ENCODE measurements at regions of chr3 and their contacts with region 1.

Region 1: DNA sequence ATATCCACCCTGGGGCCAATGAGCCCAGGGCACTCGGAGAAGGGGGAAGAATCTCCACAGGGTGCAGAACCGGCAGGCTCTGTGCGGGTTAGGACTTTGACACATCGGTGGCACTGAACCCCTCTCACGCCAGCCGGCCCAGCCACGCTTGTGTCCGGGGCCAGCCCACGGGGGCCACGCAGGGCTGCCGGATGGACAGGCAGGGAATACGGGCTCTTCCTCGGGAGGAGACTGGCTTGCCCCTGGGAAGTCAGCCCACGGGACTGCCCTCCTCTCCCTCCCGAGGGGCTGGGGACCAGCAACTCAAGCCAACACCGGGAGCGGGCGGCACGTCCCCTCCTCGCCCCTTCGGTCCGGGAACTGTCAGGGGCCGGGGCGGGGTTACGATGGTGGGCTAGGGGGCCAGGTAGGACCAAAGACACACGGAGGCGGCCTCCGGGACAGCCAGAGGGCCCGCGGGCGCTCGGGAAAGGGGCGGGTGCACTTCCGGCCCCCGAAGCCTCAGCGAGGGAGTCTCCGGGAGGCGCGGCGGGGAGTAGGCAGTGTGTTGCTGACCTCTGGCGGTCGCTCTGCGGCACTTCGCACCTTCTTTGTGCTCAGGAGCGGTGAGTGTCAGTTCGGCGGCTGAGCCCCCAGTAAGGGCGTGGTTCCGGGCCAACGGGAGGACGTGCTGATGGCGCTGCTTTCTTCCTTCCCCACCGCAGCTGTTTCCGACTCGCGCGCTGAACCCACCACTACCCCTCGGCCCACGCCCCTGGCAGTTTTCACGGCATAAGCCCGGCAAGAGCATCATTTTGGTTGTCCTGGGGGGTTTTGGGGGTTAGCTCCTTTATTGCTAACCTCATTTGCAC is 5.1 kb upstream of the CYP8B1 start:
- DNase-seq: peak; percentile 84 to 85
- H3K4me3 ChIP-seq: peak overlapping the region; percentile 58
- H3K4me3 Mint-ChIP-seq: peak overlapping the region; percentile 73
- H3K27ac Mint-ChIP-seq: peak overlapping the region; percentile 16
- H3K4me1 ChIP-seq: peaks cover 5% of the 10 kb centered on the region; the same call in 1 of the 2 replicates
- H3K4me1 Mint-ChIP-seq: peaks cover 5% of the 10 kb centered on the region
- H3K27me3 ChIP-seq: no peaks in the 10 kb centered on the region
- H3K27me3 Mint-ChIP-seq: no peaks in the 10 kb centered on the region
- CTCF ChIP-seq: peak; percentile 89 to 90

Region 2: GRCh38 chr3:42831321-42831713 is 49.5 kb before region 1 on chr3:
- CTCF ChIA-PET with region 1: interaction called, 17 read pairs
- POLR2A ChIA-PET with region 1: no interaction called
- intact Hi-C with region 1: loop called (anchors 1 kb)
- DNase-seq: peak; percentile 64 to 75
- H3K4me3 ChIP-seq: no peak overlapping the region
- H3K4me3 Mint-ChIP-seq: no peak overlapping the region
- H3K27ac Mint-ChIP-seq: no peak overlapping the region
- H3K4me1 ChIP-seq: peaks cover 36% of the 10 kb centered on the region
- H3K4me1 Mint-ChIP-seq: peaks cover 25% of the 10 kb centered on the region
- H3K27me3 ChIP-seq: no peaks in the 10 kb centered on the region
- H3K27me3 Mint-ChIP-seq: no peaks in the 10 kb centered on the region
- CTCF ChIP-seq: peak; percentile 73 to 76

Region 3: GRCh38 chr3:42839616-42840015 is 41.2 kb before region 1 on chr3:
- CTCF ChIA-PET with region 1: interaction called, 8 read pairs
- POLR2A ChIA-PET with region 1: no interaction called
- intact Hi-C with region 1: loop called (anchors 2 kb)
- DNase-seq: peak; percentile 48 to 61
- H3K4me3 ChIP-seq: no peak overlapping the region
- H3K4me3 Mint-ChIP-seq: no peak overlapping the region
- H3K27ac Mint-ChIP-seq: no peak overlapping the region
- H3K4me1 ChIP-seq: no peaks in the 10 kb centered on the region
- H3K4me1 Mint-ChIP-seq: peaks cover 4% of the 10 kb centered on the region
- H3K27me3 ChIP-seq: no peaks in the 10 kb centered on the region
- H3K27me3 Mint-ChIP-seq: no peaks in the 10 kb centered on the region
- CTCF ChIP-seq: peak; percentile 73 to 77

Region 4: DNA sequence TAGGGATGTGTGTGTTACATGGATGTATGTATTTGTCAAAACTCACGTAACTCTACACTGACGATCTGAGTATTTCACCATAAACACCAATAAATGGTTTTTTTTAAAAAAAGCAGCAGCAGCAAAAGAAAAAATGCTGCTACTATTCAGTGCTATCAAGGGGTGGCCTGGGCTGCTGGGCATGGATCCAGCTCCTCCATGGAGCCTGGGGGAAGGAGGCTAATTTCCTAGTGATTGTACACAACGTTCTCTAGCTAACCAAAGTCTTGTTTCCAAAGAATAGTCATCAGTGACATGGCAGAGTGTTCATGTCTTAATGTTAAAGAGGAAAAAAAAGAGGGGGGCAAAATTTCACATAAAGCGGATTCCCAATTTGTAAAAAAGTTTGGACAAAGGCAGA is 196.0 kb after region 1 on chr3:
- CTCF ChIA-PET with region 1: no interaction called
- POLR2A ChIA-PET with region 1: no interaction called
- intact Hi-C with region 1: no loop called
- DNase-seq: no peak
- H3K4me3 ChIP-seq: no peak overlapping the region
- H3K4me3 Mint-ChIP-seq: no peak overlapping the region
- H3K27ac Mint-ChIP-seq: no peak overlapping the region
- H3K4me1 ChIP-seq: no peaks in the 10 kb centered on the region
- H3K4me1 Mint-ChIP-seq: no peaks in the 10 kb centered on the region
- H3K27me3 ChIP-seq: no peaks in the 10 kb centered on the region
- H3K27me3 Mint-ChIP-seq: peaks cover 4% of the 10 kb centered on the region
- CTCF ChIP-seq: no peak

Measured in Caco-2 (cell line).